A673 (cell line): ENCODE measurements at regions of chrX and their contacts with region 1.

Region 1: GRCh38 chrX:151753313-151754041 is 18.9 kb downstream of the CNGA2 start:
- DNase-seq: peak; percentile 27
- H3K4me3 ChIP-seq: no peak overlapping the region
- H3K27ac ChIP-seq: no peak overlapping the region
- H3K4me1 ChIP-seq: no peaks in the 10 kb centered on the region
- H3K27me3 ChIP-seq: peaks cover 6% of the 10 kb centered on the region
- CTCF ChIP-seq: peak; percentile 63

Region 2: DNA sequence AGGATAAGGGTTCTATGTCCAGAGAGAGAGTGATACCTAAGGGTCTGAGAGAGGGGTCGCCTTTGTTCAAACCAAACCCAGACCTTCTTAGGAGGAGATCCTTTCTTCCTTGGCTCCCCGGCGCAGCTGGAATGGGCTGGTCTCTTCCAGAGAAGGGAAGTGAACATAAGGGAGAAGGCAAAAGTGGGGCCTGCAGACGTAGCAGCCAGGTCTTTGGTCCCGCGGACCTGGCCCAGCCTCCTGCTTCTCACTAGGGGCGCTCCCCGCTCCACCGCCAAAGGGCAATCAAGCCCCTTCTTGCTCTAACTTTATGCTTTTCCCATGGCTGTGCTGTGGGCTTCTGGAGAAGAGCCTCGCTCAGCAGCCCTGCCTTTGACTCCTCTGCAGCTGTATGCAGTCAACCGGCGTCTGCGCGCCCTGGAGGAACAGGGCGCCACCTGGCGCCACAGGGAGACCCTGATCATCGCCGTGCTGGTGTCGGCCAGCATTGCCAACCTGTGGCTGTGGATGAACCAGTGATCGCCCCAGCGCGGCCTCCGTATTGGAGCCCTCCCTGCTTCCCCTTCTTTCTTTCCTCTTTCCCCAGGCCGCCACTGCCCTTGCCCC is 31.1 kb before region 1 on chrX:
- CTCF ChIA-PET with region 1: no interaction called
- POLR2A ChIA-PET with region 1: no interaction called
- intact Hi-C with region 1: no loop called
- DNase-seq: no peak
- H3K4me3 ChIP-seq: no peak overlapping the region
- H3K27ac ChIP-seq: no peak overlapping the region
- H3K4me1 ChIP-seq: no peaks in the 10 kb centered on the region
- H3K27me3 ChIP-seq: no peaks in the 10 kb centered on the region
- CTCF ChIP-seq: no peak; the same call in 1 of the 2 replicates

Region 3: DNA sequence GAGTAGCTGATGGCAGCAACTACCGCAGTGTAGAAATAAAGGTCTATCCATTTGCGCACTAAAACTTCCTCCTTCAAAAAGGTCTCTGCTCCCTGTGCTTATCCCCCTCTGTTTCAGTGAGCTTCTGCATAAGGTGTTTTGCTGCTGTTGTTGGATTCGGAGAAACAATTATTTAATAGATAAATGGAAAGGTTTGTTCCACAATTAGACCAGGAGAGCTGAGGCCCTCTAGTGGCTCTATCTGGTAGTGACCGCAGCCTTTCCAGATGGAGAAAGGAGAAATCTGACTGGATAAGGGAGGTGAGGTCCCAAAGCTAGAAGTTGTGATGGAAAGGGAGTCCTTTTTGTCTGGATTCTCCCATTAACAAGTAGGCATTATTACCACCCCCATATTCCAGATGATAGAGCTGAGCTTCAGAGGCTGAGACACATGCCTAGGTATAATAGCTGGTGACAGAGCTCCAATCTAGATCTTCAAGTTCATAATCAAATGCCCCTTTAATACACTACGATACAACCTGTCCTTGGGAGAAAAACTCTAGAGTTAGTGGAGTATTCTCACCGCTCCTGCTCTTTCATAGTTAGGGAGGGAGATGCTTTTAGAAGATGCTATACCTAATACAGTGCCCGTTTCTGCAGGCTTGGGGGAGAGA is 879.1 kb after region 1 on chrX:
- CTCF ChIA-PET with region 1: interaction called, 6 read pairs
- POLR2A ChIA-PET with region 1: no interaction called
- intact Hi-C with region 1: loop called (anchors 2 kb)
- DNase-seq: peak; percentile 49
- H3K4me3 ChIP-seq: no peak overlapping the region
- H3K27ac ChIP-seq: no peak overlapping the region
- H3K4me1 ChIP-seq: no peaks in the 10 kb centered on the region
- H3K27me3 ChIP-seq: peaks cover 31% of the 10 kb centered on the region
- CTCF ChIP-seq: peak; percentile 89

Region 4: DNA sequence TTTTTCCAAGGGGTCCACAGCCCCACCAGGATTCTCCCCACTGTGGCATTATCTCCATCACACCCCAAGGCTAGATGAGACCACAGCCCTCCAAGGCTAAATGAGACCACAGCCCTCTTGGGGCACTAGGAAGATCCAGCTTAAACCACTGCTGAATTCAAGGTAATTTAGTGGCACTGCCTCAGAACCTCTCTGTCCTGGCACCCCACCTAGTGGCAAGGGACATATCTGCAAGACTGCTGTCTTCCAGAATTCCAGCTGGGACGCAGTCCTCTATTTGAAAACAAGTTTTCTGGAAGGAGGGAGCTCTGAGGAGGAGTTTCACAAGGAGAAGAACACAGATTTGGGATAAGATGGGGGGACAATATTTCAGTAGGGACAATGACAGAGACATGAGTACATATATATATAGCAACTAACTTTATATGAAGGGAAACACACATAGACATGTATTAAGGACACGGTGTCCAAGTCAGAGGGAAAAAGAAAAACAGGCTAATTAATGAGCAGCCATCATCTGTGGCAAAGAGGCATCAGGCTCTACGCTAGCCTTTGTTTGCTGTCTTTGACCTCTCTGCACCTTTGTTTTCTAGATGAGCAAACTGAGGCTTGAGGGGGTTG is 1067.8 kb after region 1 on chrX:
- CTCF ChIA-PET with region 1: interaction called, 3 read pairs
- POLR2A ChIA-PET with region 1: no interaction called
- intact Hi-C with region 1: loop called (anchors 5 kb)
- DNase-seq: peak; percentile 51
- H3K4me3 ChIP-seq: no peak overlapping the region
- H3K27ac ChIP-seq: no peak overlapping the region
- H3K4me1 ChIP-seq: no peaks in the 10 kb centered on the region
- H3K27me3 ChIP-seq: peaks cover 26% of the 10 kb centered on the region
- CTCF ChIP-seq: peak; percentile 66

Region 5: DNA sequence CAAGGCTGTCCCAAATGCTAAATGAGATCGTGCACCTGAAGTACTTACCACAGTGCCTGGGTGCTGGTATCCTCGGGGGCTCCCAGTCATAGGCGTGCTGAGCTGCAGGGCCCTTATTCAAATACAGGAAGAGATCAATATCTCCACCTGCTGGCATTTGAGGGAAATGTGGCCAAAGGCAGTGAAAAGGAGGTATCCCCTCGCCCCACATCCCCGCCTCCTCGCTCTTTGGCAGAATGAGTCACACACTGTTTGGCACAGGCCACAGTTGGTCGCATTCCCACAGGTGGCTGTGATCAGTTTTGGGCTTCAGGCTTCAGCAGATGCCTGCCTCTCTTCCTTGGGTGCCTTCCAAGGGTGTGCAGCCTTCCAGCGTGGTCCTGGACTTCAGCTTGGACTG is 1172.8 kb after region 1 on chrX:
- CTCF ChIA-PET with region 1: no interaction called
- POLR2A ChIA-PET with region 1: no interaction called
- intact Hi-C with region 1: loop called (anchors 10 kb)
- DNase-seq: peak; percentile 86
- H3K4me3 ChIP-seq: no peak overlapping the region
- H3K27ac ChIP-seq: no peak overlapping the region
- H3K4me1 ChIP-seq: no peaks in the 10 kb centered on the region
- H3K27me3 ChIP-seq: no peaks in the 10 kb centered on the region
- CTCF ChIP-seq: peak; percentile 63